ENCODE measurements at regions of chr5 and their contacts with region 1.

Region 1: DNA sequence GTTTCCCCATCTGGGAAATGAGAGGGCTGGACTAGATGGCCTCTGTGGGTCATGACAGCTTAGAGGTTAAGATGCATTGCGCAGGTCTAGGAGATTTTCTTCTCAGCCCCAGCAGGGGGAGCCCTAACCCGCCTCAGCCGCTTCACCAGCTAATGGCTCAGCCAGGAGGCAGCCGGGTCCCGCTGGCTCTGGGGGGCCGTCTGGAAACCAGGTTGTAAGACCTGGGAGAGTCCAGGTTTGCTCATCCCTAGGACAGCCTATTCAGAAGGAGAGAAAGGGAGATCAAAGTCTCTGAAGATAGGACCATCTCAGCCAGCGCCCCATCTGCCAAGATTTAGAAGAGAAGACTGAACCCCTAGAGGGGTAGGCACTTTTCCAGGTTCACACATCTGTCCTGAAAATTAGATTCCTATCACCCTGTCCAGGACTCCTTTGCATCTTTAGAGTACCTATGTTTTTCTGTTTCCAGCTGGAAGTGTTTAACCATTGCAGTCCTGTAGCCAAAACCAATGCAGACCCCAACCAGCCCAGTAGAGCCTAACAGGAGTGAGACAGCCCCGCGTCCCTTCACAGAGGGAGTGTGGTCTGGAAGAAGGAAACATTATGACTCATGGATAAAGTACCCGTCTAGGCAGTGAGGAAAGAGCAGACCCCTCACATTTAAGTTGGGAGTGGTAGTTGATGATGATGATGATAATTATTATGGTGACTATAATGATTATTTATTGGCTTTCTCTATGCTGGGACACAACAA is 27.5 kb downstream of the SPARC start:
- DNase-seq: peak; percentile 85 to 92 (median 90)
- H3K4me3 ChIP-seq: no peak overlapping the region
- H3K27ac ChIP-seq: peak overlapping the region in 1 of 2 donors; percentile 39
- H3K4me1 ChIP-seq: peaks cover 10% of the 10 kb centered on the region
- H3K27me3 ChIP-seq: no peaks in the 10 kb centered on the region
- CTCF ChIP-seq: peak; percentile 77 to 93 (median 87)
- EP300 ChIP-seq: no peak
- POLR2A ChIP-seq: no peak

Region 2: GRCh38 chr5:151740336-151740942 is 81.3 kb after region 1 on chr5:
- intact Hi-C with region 1: loop called (anchors 2 kb)
- DNase-seq: peak; percentile 82 to 88 (median 87)
- H3K4me3 ChIP-seq: no peak overlapping the region
- H3K27ac ChIP-seq: peak overlapping the region; percentile 38 to 50
- H3K4me1 ChIP-seq: peaks cover 14% of the 10 kb centered on the region
- H3K27me3 ChIP-seq: no peaks in the 10 kb centered on the region
- CTCF ChIP-seq: peak; percentile 72 to 93 (median 93)
- EP300 ChIP-seq: no peak
- POLR2A ChIP-seq: no peak